GM10248 (cell line): ENCODE measurements at regions of chr11 and their contacts with region 1.

Region 1: GRCh38 chr11:95089620-95090542 is at the start of gene ENDOD1:
- DNase-seq: peak; percentile 91
- CTCF ChIP-seq: no peak

Region 2: DNA sequence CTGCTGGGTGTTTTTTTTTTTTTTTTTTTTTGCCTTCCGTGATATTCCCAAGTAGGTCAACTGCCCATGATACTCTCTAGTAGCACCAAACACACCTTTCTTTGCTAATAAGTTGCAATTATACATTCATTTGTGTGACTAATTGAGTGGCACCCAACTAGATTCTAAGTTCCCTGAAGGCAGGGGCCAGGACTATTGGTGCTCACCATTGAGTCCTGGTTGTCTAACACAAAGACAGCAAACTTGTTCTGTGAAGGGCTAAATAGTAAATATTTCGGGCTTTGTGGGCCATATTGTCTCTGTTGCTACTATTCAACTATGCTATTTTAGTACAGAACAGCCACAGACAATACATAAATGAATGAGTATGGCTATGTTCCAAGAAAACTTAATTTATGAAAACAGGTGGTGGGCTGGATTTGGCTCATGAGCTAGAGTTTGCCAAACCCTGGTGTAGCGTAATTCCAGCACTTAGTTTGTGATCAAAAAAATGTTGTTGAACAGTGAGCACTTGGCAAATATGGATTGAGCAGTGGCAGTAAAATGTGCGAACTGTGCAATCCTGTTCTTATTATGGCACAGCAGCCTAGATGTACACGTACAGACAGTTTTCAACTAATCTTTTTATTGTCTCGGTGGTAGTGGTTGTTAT is 11.1 kb after region 1 on chr11:
- CTCF ChIA-PET with region 1: interaction called, 306 read pairs
- POLR2A ChIA-PET with region 1: no interaction called
- DNase-seq: no peak
- CTCF ChIP-seq: no peak